Tibial artery (tissue), 4 donors: ENCODE measurements at regions of chr4 and their contacts with region 1.

Region 1: GRCh38 chr4:37765741-37766140 is 60.7 kb upstream of the PGM2 start:
- DNase-seq: no peak
- H3K4me3 ChIP-seq: no peak overlapping the region
- H3K27ac ChIP-seq: no peak overlapping the region
- H3K4me1 ChIP-seq: no peaks in the 10 kb centered on the region
- H3K27me3 ChIP-seq: peaks cover 0 to 4% of the 10 kb centered on the region in 2 donors
- CTCF ChIP-seq: no peak

Region 2: DNA sequence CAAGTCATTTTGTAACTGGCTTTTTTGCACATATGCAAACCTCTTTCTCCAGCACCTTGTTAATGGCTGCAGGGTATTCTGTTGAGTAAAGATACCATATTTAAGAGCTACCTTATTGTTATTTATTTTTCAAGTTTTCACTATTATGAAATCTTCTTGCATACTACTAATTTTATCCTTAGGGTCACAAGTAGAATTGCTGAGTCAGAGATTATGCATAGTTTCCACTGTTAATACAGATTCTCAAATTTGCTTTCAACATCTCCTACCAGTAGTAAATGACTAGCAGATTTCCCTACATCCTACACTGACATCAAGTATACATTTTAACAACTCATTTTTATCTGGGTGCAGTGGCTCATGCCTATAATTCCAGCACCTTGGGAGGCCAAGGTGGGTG is 192.2 kb before region 1 on chr4:
- intact Hi-C with region 1: no loop called
- DNase-seq: no peak
- H3K4me3 ChIP-seq: no peak overlapping the region
- H3K27ac ChIP-seq: no peak overlapping the region
- H3K4me1 ChIP-seq: no peaks in the 10 kb centered on the region
- H3K27me3 ChIP-seq: no peaks in the 10 kb centered on the region
- CTCF ChIP-seq: no peak

Region 3: DNA sequence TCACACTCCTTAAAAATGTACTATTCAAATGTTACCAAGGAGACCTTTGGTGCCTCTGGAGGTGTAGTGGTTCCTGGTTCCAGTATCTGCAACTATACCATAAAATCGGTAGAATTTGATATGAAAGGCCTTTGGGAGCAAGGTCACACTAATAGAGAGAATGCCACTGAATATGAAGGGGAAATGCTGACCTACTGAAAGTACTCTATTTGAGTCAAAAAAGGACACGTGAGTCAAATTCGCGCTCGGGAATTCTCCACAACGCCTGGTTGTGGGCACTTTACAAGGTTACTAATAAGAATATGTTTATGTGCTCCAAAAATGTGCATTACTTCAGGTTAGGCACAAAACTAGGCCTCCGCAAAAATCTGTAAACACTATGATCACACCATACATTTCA is 40.0 kb before region 1 on chr4:
- intact Hi-C with region 1: loop called (anchors 2 kb)
- DNase-seq: no peak
- H3K4me3 ChIP-seq: no peak overlapping the region
- H3K27ac ChIP-seq: no peak overlapping the region
- H3K4me1 ChIP-seq: no peaks in the 10 kb centered on the region
- H3K27me3 ChIP-seq: no peaks in the 10 kb centered on the region
- CTCF ChIP-seq: no peak

Region 4: DNA sequence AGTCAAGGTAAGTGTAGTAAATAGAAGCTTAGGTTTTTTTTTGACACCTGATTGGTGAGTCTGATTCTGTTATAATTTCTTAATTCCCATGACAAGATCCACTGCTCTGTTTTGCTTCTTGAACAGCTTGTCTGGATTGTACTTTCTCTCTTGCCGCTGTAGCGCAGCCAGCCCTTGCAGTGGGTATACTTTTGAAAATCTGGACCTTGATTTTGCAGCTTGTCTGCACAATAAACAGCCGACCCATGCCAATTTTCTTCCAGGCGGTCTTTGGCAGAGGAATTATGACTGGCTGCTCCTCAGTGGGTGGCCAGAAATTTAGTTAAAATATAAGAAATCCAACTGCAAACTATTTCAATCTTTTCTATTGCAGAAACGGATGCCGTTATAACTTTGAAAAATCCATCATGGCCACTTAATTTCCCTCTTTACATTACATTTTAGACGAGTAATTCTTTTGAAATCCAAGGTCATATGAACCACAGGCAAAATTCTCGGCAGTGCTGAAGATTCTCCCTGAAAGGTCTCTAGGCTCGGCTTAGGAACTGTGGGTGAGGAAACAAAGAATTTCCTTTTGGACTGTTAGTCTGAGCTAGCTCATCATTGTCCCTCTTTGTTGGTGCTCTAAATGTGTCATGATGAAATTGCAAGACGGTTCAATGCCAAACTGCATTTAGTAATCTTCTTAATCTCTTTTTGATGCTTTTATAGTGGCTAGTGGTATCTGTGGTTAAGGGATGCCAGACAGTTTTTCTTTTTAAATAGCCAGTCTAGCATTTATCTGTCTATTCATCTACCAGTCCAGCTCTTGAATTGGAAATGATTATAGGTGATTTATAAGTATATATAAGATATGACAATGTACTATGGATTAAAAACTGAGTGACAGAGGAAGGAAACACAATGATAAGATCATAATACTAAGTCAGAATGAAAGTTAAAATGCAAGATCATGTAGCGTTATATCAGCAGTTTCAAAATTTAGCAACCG is 163.0 kb after region 1 on chr4:
- intact Hi-C with region 1: no loop called
- DNase-seq: no peak
- H3K4me3 ChIP-seq: no peak overlapping the region
- H3K27ac ChIP-seq: no peak overlapping the region
- H3K4me1 ChIP-seq: peaks cover 0 to 43% (median 6%) of the 10 kb centered on the region in 4 donors
- H3K27me3 ChIP-seq: no peaks in the 10 kb centered on the region
- CTCF ChIP-seq: no peak